Activated CD4-positive, alpha-beta T cell treated with anti-CD3 and anti-CD28 coated beads, Interleukin-2, amount 10 ng/mL, durations not matched to agents 24 days and 14 days (primary cell): ENCODE measurements at regions of chr17 and their contacts with region 1.

Region 1: DNA sequence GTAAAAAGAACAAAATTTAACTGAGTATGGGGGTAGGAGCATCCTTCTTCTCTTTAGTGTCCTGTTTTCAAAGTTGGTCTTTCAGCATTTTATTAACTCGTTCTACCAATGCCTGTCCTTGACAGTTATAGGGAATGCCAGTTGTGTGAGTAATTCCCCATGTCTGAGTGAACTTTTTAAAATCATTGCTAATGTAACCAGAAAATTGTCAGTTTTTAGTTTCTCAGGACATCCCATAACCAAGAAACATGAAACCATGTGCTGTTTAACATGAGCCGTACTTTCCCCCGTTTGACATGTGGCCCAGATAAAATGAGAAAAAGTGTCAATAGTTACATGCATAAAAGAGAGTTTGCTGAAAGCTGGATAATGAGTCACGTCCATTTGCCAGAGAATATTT is 71.4 kb upstream of the ARL4D start:
- DNase-seq: no peak
- H3K4me3 Mint-ChIP-seq: no peak overlapping the region
- H3K27ac Mint-ChIP-seq: no peak overlapping the region
- H3K4me1 Mint-ChIP-seq: peaks cover 15% of the 10 kb centered on the region
- H3K27me3 Mint-ChIP-seq: peaks cover 12% of the 10 kb centered on the region

Region 2: GRCh38 chr17:43094129-43094835 is 233.1 kb before region 1 on chr17:
- intact Hi-C with region 1: no loop called
- DNase-seq: no peak
- H3K4me3 Mint-ChIP-seq: no peak overlapping the region
- H3K27ac Mint-ChIP-seq: no peak overlapping the region
- H3K4me1 Mint-ChIP-seq: no peaks in the 10 kb centered on the region
- H3K27me3 Mint-ChIP-seq: no peaks in the 10 kb centered on the region

Region 3: GRCh38 chr17:43341715-43342588 is 14.5 kb after region 1 on chr17:
- intact Hi-C with region 1: loop called (anchors 1 kb)
- DNase-seq: no peak
- H3K4me3 Mint-ChIP-seq: peak overlapping the region; percentile 45
- H3K27ac Mint-ChIP-seq: peak overlapping the region; percentile 92
- H3K4me1 Mint-ChIP-seq: peaks cover 21% of the 10 kb centered on the region
- H3K27me3 Mint-ChIP-seq: no peaks in the 10 kb centered on the region

Region 4: GRCh38 chr17:43418441-43419374 is 91.3 kb after region 1 on chr17:
- intact Hi-C with region 1: no loop called
- DNase-seq: no peak
- H3K4me3 Mint-ChIP-seq: no peak overlapping the region
- H3K27ac Mint-ChIP-seq: no peak overlapping the region
- H3K4me1 Mint-ChIP-seq: no peaks in the 10 kb centered on the region
- H3K27me3 Mint-ChIP-seq: peaks cover 18% of the 10 kb centered on the region